ENCODE measurements at regions of chr9 and their contacts with region 1.

Region 1: GRCh38 chr9:8816361-8816760 is 1016.8 kb upstream of the DMAC1 start:
- DNase-seq: no peak
- ATAC-seq: no peak
- H3K4me3 Mint-ChIP-seq: no peak overlapping the region
- H3K27ac Mint-ChIP-seq: no peak overlapping the region
- H3K4me1 Mint-ChIP-seq: no peaks in the 10 kb centered on the region
- H3K27me3 Mint-ChIP-seq: no peaks in the 10 kb centered on the region

Region 2: DNA sequence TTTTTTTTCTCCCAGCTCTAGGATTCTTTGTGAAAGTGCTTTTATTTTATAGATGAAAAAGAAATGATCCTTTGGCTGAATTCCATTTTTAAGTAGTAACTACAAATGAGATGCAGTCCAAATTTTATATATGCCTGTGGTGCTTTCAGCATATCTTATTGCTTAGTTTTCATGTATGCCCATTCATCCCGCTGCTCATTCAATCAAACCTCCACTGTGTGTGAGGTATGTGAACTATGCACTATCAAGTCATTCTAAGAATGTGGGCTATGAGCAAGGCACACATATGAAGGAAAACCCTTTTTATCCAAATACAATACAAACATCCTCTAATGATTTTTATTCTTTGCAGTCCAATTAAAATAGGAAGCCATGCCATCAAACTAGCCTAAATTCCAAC is 52.3 kb after region 1 on chr9:
- CTCF ChIA-PET with region 1: no interaction called
- POLR2A ChIA-PET with region 1: no interaction called
- intact Hi-C with region 1: loop called in 1 of 2 experiments (anchors 5 kb)
- DNase-seq: no peak
- ATAC-seq: no peak
- H3K4me3 Mint-ChIP-seq: no peak overlapping the region
- H3K27ac Mint-ChIP-seq: no peak overlapping the region
- H3K4me1 Mint-ChIP-seq: no peaks in the 10 kb centered on the region
- H3K27me3 Mint-ChIP-seq: no peaks in the 10 kb centered on the region

Measured in activated CD4-positive, alpha-beta T cell treated with anti-CD3 and anti-CD28 coated beads for 36 hours (primary cell).